ENCODE measurements at regions of chr5 and their contacts with region 1.

Region 1: DNA sequence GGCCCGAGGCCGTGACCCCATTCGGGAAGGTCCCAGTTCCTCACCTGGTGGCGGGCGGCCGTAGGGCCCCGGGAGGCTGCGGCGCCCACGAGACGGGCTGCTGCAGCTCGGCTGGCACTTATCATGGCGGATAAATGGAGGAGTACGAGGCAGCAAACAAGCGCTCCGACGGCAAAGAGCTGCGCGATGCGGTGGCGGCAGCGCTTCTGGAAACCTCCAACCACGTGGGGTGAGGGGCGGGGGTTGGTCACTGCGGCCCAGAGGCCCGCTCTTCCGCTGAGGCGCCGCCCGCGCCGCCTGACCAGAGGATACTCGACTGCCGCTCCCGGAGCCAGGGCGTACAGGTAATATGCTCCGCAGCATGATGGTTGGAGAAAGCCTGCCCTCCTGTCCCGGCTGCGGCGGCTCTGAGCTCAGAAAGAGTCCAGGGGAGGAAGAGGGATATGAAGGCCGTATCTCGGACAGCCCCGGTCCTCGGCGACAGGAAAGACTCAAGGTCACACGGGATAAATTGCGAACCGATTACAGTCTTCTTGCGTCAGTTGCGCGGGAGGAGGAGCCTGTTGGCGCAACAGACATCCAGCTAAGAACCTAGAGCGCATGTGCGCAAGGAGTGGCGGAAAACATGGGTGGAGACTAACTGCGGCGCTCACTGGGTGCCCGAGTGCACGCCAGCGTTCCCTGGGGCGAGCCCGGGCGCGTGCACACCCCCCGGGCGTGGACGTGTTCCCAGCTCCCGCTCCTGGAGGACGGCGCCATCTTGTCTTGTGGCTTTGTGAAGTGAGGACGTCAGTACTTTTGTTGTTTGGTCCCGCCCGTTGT is at the start of gene HSPA9:
- DNase-seq: peak; percentile 98

Region 2: GRCh38 chr5:138542956-138543729 is 32.3 kb before region 1 on chr5 and contains the start of gene ETF1:
- CTCF ChIA-PET with region 1: no interaction called
- POLR2A ChIA-PET with region 1: interaction called, 31 read pairs
- DNase-seq: peak; percentile 96

Region 3: GRCh38 chr5:138594305-138595058 is 19.1 kb after region 1 on chr5:
- CTCF ChIA-PET with region 1: interaction called, 9 read pairs
- POLR2A ChIA-PET with region 1: interaction called, 10 read pairs
- DNase-seq: no peak

Measured in HEK293T (cell line).